ENCODE measurements at regions of chr19 and their contacts with region 1.

Region 1: DNA sequence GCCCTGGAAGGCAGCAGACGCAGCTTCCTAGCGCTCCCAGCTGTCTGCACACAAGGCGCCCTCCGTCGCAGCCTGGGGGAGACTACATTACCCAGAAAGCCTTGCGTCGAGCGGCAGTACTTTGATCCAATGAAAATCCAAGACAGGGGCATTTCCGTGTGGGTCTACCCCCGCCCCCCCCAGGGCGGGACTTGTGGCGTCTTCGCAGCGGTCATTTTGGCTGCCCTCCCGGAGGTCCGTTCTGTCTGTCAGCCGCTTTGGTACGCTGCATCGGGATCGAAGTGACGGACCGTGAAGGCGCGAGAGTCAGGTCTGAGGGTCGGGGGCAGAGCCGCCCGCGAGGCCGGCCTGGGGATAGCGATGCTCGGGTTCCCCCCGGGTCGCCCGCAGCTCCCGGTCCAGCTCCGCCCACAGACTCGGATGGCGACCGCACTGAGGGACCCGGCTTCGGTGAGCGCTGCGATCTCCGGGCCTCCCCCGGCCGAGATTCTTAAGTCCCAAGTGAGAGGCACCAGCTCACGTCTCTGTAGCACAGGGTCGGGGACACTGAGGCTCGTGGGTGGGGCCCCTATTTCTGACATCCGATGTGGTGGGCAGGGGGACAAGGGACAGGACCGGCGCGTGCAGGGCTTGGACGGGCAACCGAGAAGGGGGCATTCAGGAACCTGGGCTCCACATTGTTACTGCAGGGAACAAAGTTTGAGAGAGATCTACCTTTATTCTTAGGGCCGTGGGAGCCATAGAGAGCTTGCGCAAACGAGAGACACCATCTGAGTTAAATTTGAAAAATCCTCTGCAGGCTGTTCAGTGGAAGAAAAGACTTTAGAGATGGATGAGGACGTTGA is at the start of gene ZNF211:
- DNase-seq: peak; percentile 82 to 92
- ATAC-seq: peak; percentile 100
- H3K4me3 ChIP-seq: peak within 1 kb of the TSS; percentile 85 to 96 (median 92)
- H3K27ac ChIP-seq: peak within 1 kb of the TSS; percentile 79 to 86 (median 86)
- H3K4me1 ChIP-seq: peaks cover 7 to 13% of the 10 kb centered on the region in 2 donors
- H3K27me3 ChIP-seq: no peaks in the 10 kb centered on the region
- CTCF ChIP-seq: no peak
- POLR2A ChIP-seq: no peak
- total RNA-seq, gene ZNF211: 2.9 to 5.5 (median 4.3) TPM

Region 2: GRCh38 chr19:57671114-57671878 is 38.1 kb after region 1 on chr19:
- in situ Hi-C with region 1: no loop called
- intact Hi-C with region 1: no loop called
- DNase-seq: no peak
- ATAC-seq: no peak
- H3K4me3 ChIP-seq: no peak overlapping the region
- H3K27ac ChIP-seq: no peak overlapping the region
- H3K4me1 ChIP-seq: no peaks in the 10 kb centered on the region
- H3K27me3 ChIP-seq: peaks cover 0 to 5% (median 0%) of the 10 kb centered on the region in 3 donors
- CTCF ChIP-seq: no peak
- POLR2A ChIP-seq: no peak

Region 3: DNA sequence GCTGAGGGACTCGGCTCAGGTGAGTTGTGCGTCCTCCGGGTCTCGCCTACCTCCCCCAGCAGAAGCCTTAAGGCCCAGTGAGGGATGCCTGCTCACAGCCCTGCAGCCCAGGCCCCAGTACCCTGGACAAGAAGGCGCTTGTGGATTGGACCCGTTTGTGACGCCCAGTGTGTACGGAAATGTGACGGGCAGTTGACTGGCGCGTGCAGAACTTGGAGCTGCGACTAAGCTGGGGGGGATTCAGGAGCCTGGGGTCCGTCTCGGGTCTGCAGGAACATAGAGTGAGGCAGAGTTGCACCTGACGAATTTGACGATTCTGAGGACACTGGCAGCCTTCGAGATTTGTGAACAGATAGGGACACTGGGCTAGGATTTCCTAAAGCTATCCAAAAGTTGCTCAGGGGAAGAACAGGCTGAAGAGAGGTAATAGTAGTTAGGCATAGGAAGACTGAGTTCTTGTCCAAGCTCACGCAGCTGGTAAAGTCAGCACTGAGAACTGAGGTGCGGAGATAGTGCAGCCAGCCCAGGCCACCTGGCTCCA is 49.1 kb after region 1 on chr19:
- in situ Hi-C with region 1: no loop called
- intact Hi-C with region 1: loop called (anchors 1 kb)
- DNase-seq: no peak
- ATAC-seq: peak; percentile 22 to 27
- H3K4me3 ChIP-seq: peak overlapping the region; percentile 74 to 99 (median 88)
- H3K27ac ChIP-seq: peak overlapping the region; percentile 55 to 82 (median 68)
- H3K4me1 ChIP-seq: peaks cover 10 to 14% of the 10 kb centered on the region in 2 donors
- H3K27me3 ChIP-seq: no peaks in the 10 kb centered on the region
- CTCF ChIP-seq: no peak
- POLR2A ChIP-seq: no peak

Region 4: GRCh38 chr19:57701625-57702024 is 68.4 kb after region 1 on chr19:
- in situ Hi-C with region 1: no loop called
- intact Hi-C with region 1: no loop called
- DNase-seq: no peak
- ATAC-seq: no peak
- H3K4me3 ChIP-seq: no peak overlapping the region
- H3K27ac ChIP-seq: no peak overlapping the region
- H3K4me1 ChIP-seq: no peaks in the 10 kb centered on the region
- H3K27me3 ChIP-seq: no peaks in the 10 kb centered on the region
- CTCF ChIP-seq: no peak
- POLR2A ChIP-seq: no peak

Region 5: DNA sequence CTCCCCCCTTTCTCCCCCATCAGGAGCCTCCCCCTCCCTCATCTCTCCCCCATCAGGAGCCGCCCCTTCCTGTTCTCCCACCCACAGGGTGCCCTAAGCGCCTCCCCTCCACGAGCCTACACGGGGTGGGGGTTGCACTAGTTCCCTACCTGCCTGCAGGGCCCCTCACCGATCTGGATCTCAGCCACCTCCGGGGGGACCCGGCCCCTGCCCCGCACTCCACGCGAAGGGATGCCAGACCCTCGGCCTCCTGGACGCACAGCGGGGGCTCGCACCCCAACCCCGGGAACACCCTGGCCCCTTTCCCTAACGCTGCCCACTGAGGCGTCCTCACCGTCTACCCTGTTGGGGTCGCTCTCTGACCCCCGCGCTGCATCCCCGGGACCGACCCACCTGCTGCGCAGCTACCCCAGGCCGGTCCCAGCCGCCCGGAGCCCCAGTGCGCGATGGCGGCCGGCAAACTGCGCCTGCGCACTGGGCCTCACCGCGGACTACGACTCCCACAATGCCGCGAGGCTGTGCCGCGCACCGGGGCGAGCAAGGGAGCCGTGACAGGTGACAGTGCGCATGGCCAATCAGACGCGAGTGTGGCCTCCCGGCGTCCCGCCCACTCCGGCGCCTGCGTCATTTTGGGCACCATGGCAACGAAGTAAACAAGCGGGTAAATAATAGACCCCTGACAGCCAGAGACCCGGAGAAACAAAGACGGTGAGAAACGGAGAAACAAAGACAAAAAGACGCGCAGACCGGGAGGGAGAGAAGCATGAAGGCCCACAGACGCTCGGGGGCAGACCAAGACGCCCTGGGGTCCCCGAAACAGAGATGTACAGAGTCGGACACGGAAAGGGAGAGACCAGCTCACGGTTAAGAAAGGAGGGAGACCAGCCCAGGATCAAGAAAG is 464.8 kb after region 1 on chr19 and contains the start of gene ZSCAN18:
- in situ Hi-C with region 1: no loop called
- intact Hi-C with region 1: no loop called
- DNase-seq: peak; percentile 89 to 92
- ATAC-seq: peak; percentile 98 to 99
- H3K4me3 ChIP-seq: peak within 1 kb of the TSS; percentile 85 to 99 (median 98)
- H3K27ac ChIP-seq: peak within 1 kb of the TSS; percentile 83 to 89 (median 86)
- H3K4me1 ChIP-seq: peaks cover 5 to 9% of the 10 kb centered on the region in 2 donors
- H3K27me3 ChIP-seq: no peaks in the 10 kb centered on the region
- CTCF ChIP-seq: no peak
- POLR2A ChIP-seq: peak; percentile 28 to 35
- total RNA-seq, gene ZSCAN18: 11.2 to 20.6 (median 15.2) TPM